ENCODE measurements at regions of chr1 and their contacts with region 1.

Region 1: DNA sequence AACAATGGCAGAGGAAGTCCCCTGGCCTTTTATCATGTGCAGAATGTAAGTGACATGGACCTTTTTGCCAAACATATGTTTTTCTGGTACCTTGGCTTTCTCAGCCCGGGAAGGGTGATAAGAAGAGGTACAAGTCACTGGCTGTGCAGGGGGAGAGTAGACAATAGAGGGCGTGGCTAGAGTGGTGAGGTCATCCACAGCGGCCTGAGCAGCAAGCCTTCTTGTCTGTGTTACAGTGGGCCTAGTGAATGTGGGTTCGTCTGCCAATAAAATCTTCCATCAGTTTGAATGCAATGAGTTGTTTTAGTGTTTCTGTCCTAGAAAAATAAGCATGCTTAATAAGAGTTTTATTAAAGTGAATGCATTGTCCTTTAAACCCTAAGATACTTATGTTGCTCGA is 59.0 kb upstream of the PGD start:
- DNase-seq: peak; percentile 35
- H3K4me3 ChIP-seq: no peak overlapping the region
- H3K27ac ChIP-seq: no peak overlapping the region
- H3K4me1 ChIP-seq: no peaks in the 10 kb centered on the region
- H3K27me3 ChIP-seq: no peaks in the 10 kb centered on the region
- CTCF ChIP-seq: no peak

Region 2: DNA sequence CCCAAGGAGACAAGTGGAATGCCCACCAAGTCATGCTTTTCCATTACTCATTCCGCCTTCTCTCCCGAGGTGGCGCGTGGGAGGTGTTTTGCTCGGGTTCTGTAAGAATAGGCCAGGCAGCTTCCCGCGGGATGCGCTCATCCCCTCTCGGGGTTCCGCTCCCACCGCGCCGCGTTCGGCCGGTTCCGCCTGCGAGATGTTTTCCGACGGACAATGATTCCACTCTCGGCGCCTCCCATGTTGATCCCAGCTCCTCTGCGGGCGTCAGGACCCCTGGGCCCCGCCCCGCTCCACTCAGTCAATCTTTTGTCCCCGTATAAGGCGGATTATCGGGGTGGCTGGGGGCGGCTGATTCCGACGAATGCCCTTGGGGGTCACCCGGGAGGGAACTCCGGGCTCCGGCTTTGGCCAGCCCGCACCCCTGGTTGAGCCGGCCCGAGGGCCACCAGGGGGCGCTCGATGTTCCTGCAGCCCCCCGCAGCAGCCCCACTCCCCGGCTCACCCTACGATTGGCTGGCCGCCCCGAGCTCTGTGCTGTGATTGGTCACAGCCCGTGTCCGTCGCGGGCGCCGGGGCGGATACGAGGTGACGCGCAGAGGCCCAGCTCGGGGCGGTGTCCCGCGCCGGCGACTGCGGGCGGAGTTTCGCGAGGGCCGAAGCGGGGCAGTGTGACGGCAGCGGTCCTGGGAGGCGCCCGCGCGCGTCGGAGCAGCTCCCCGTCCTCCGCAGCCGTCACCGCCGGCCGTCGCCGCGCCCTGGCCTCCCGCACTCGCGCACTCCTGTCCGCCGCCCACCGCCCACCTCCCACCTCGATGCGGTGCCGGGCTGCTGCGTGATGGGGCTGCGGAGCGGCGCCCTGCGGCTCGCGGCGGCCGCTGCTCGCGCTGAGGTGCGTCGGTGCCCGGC is 129.7 kb before region 1 on chr1 and contains the start of gene KIF1B:
- CTCF ChIA-PET with region 1: interaction called, 6 read pairs
- POLR2A ChIA-PET with region 1: no interaction called
- intact Hi-C with region 1: loop called (anchors 10 kb)
- DNase-seq: peak; percentile 99
- H3K4me3 ChIP-seq: peak within 1 kb of the TSS; percentile 90
- H3K27ac ChIP-seq: peak within 1 kb of the TSS; percentile 90
- H3K4me1 ChIP-seq: peaks cover 16% of the 10 kb centered on the region
- H3K27me3 ChIP-seq: no peaks in the 10 kb centered on the region
- CTCF ChIP-seq: peak; percentile 99
- total RNA-seq, gene KIF1B: 69.5 and 71.7 TPM in 2 replicates